Right ventricle myocardium superior (tissue), 1 donor: ENCODE measurements at regions of chr20 and their contacts with region 1.

Region 1: GRCh38 chr20:58236612-58237330 is 8.3 kb upstream of the ANKRD60 start:
- DNase-seq: peak; percentile 85
- ATAC-seq: peak; percentile 96

Region 2: GRCh38 chr20:58160451-58161061 is 76.2 kb before region 1 on chr20:
- intact Hi-C with region 1: no loop called
- DNase-seq: no peak
- ATAC-seq: peak; percentile 66

Region 3: GRCh38 chr20:58309575-58310290 is 73.0 kb after region 1 on chr20 and contains the start of gene RAB22A:
- intact Hi-C with region 1: no loop called
- DNase-seq: peak; percentile 90
- ATAC-seq: peak; percentile 94
- total RNA-seq, gene RAB22A: 5.8 TPM

Region 4: GRCh38 chr20:58447511-58448391 is 211.0 kb after region 1 on chr20:
- intact Hi-C with region 1: loop called (anchors 2 kb)
- DNase-seq: no peak
- ATAC-seq: peak; percentile 72

Region 5: GRCh38 chr20:58669287-58670006 is 432.7 kb after region 1 on chr20:
- intact Hi-C with region 1: no loop called
- DNase-seq: no peak
- ATAC-seq: no peak

Region 6: GRCh38 chr20:59102841-59103299 is 866.1 kb after region 1 on chr20:
- intact Hi-C with region 1: no loop called
- DNase-seq: no peak
- ATAC-seq: no peak